OCI-LY7 (cell line): ENCODE measurements at regions of chr16 and their contacts with region 1.

Region 1: DNA sequence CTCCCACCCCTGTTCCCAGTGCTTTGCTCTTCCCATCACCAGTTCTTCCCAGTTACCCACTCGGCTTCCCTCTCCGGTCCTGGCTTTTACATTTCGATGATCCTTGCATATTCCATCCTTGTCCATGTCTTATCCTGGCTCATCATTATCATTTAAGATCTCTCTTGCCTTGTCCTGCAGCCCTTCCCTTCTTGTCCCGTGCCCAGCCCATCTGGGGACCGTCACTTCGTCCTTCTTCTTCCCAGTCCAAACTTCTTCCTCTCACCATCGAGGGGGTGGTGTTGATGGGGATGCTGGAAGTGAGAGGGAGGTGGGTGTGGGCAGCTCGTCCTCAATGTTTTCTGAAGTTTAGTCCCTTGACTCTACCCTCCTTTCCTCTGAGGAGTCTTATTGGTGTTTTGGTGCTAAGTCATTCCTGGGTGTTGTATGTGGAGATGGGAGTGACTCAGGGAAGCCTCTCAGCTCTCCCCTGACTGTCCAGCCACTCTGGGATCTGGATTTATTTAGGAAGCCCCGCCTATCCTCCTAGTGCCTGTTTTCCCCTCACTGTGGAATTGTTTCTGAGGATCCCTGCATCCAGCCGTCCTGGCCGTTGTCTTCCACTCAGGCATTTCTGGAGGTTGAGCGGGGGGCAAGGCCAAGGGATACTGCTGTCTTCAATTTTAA is 975 bp downstream of the SNX29 start:
- DNase-seq: no peak
- H3K4me3 ChIP-seq: peak overlapping the region; percentile 98
- H3K27ac ChIP-seq: no peak overlapping the region
- H3K4me1 ChIP-seq: peaks cover 46% of the 10 kb centered on the region
- CTCF ChIP-seq: no peak

Region 2: DNA sequence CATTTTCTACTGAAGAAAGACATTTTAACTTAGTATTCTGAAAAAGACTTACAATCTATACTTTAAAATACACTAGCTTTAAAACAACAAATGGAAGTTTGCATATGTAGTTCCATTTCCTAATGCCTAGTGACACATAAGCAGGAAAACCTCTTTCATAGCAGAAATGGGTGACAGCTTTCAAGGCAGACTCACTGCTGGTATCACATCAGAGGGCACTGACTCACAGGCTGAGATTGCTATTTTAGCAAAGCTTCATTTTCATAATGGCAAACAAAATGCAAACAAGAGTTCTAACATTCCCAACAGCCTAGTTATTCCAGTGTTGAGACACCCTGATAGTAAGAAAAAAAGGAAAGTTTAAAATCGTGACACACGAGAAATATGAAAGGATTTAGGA is 80.7 kb before region 1 on chr16:
- CTCF ChIA-PET with region 1: no interaction called
- POLR2A ChIA-PET with region 1: no interaction called
- intact Hi-C with region 1: no loop called
- DNase-seq: no peak
- H3K4me3 ChIP-seq: no peak overlapping the region
- H3K27ac ChIP-seq: no peak overlapping the region
- H3K4me1 ChIP-seq: peaks cover 3% of the 10 kb centered on the region
- CTCF ChIP-seq: no peak

Region 3: DNA sequence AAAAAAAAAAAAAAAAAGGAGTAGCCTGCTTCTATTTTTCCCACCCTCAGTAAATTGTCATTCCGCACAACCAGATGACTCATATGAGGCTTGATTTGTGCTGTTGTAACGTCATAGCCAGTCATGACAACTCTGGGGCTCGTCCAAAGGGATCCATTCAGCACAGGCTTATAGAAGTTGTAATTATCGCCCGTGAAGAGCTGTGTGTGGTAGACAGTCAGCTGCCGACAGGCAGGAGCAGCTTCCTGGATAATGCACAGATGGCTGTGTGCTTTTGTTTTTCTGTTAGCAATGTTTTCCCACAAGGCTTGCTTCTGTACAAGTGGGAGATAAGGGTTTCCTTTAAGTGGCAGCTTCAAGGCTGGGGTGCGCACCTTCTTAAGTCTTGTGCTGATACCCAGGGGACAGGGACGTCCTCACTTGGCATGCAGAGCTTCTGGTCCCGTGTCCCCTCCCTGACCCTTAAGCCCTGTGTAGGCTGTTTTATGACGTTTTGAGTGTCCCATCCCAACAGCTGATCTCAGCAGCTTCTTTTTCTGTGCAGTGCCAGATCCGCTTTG is 25.0 kb after region 1 on chr16:
- CTCF ChIA-PET with region 1: no interaction called
- POLR2A ChIA-PET with region 1: no interaction called
- intact Hi-C with region 1: loop called (anchors 2 kb)
- DNase-seq: no peak
- H3K4me3 ChIP-seq: no peak overlapping the region
- H3K27ac ChIP-seq: no peak overlapping the region
- H3K4me1 ChIP-seq: peaks cover 3% of the 10 kb centered on the region
- CTCF ChIP-seq: no peak

Region 4: GRCh38 chr16:12054396-12054795 is 76.9 kb after region 1 on chr16:
- CTCF ChIA-PET with region 1: no interaction called
- POLR2A ChIA-PET with region 1: no interaction called
- intact Hi-C with region 1: no loop called
- DNase-seq: no peak
- H3K4me3 ChIP-seq: no peak overlapping the region
- H3K27ac ChIP-seq: no peak overlapping the region
- H3K4me1 ChIP-seq: peaks cover 14% of the 10 kb centered on the region
- CTCF ChIP-seq: no peak